ENCODE measurements at regions of chr1 and their contacts with region 1.

Region 1: DNA sequence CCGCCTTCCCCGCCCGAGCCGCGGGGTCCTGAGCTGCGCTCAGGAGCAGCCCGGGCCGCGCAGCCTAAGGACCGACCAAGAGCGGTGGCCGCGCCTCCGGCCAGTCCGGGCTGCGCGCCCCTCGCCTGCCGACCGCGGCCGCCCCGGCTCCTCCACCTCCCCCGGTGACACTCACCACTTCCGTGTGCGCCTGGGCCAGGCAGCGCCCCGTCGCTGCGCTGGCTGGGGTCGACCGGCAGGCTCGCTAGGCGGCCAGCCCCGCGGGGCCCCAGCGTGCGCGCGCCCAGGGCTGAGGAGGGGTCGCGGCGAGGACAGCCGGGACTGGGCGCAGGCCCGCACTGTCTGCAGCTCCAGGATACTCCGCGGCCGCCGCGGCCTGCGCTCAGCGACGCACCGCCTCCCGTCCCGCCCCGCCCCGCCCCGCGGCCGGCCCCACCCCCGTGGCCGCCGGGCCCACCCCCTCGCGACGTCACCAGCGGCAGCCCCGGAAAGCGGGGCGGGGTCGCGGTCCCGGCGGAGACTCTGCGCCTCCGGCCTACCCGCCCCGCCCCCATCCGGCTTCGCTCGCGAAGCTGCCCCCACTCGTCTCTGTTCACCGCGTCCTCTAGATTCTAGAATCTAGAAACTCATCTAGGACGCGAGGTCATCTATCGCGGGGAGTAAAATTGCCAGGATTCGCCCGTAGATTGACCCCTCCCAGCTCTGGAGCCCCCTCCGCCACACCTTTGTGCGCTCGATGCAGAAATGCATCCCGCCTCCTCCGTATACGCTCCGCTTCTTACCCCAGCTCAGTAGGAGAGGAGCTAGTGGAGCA is at the start of gene JAK1:
- DNase-seq: peak; percentile 91 to 92
- ATAC-seq: peak; percentile 92 to 96 (median 94)
- H3K4me3 ChIP-seq: peak within 1 kb of the TSS; percentile 66 to 99 (median 88)
- H3K27ac ChIP-seq: peak within 1 kb of the TSS; percentile 93 to 100 (median 96)
- H3K4me1 ChIP-seq: peaks cover 7 to 50% (median 32%) of the 10 kb centered on the region in 9 donors
- H3K27me3 ChIP-seq: no peaks in the 10 kb centered on the region
- CTCF ChIP-seq: peak in 3 of 9 donors; percentile 3 to 19 (median 10)
- total RNA-seq, gene JAK1: 73.4 to 122 (median 84.4) TPM

Region 2: DNA sequence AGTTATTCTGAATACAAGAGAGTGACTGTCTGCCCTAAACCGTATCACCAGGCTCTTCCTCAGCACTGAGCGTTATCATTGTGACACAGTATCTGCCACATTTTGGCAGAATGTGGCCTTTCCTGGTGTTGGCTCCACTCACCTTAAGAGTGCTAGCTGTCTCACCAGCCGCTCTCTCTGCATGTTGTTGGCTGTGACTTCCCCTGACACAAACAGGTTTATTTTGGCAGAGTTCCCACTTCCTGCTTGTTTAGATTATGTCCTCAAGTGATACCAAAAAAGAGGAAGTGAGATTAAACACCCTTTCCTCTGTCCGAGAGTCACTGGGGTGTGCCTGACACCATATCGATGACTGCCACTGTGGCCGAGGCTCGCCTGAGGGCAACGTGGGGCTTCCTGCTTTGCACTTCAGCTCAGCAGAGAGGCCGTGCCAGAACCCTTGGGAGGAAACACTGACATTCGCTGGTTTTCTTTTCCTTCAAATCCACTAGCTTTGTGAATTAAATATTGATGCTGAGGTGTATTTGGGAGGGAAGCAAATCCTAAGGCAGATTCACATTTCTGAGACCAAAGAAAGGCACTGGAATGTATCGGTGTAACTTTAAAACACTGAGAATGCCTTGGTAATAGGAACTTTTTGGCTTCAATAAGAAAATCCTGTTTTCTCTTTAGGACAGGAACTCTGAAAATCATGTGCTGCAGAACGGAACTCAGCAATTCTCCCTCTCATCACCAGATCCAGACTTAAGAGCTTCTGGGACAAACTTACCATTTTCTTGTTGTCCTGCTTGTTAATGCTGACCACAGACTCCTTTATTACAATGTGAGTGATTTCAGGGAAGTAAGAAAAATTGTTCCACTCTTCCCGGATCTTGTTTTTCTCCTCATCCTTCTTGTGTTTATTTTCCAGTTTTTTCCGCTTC is 102.1 kb before region 1 on chr1:
- intact Hi-C with region 1: loop called in 2 of 10 experiments (anchors 5 to 10 kb)
- DNase-seq: peak; percentile 67 to 71
- ATAC-seq: peak; percentile 85 to 95 (median 88)
- H3K4me3 ChIP-seq: peak overlapping the region in 1 of 10 donors; percentile 4
- H3K27ac ChIP-seq: peak overlapping the region in 8 of 10 donors; percentile 8 to 82 (median 62)
- H3K4me1 ChIP-seq: peaks cover 0 to 32% (median 19%) of the 10 kb centered on the region in 9 donors
- H3K27me3 ChIP-seq: no peaks in the 10 kb centered on the region
- CTCF ChIP-seq: no peak

Region 3: DNA sequence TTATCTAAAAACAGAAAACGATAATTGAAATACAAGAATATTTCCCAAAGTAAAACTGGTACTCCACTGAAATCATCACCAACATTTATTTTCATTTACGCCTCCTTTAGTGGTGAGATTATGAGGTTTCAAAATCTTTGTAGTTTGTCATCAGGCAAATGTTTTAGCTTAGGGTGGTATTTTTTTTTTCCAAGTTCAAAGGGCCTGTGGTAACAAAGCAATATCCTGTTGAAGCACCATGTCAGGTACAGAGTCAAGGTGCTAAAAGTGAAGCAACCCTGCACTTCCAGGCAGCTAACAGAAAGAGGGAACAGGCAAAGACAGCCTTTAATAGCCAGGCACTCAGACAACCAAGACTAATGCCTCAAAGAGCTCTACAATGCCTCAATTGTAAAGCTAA is 89.2 kb before region 1 on chr1:
- intact Hi-C with region 1: loop called in 3 of 10 experiments (anchors 5 to 10 kb)
- DNase-seq: no peak
- ATAC-seq: no peak
- H3K4me3 ChIP-seq: no peak overlapping the region
- H3K27ac ChIP-seq: peak overlapping the region in 1 of 10 donors; percentile 22
- H3K4me1 ChIP-seq: peaks cover 0 to 57% (median 25%) of the 10 kb centered on the region in 9 donors
- H3K27me3 ChIP-seq: no peaks in the 10 kb centered on the region
- CTCF ChIP-seq: no peak

Region 4: DNA sequence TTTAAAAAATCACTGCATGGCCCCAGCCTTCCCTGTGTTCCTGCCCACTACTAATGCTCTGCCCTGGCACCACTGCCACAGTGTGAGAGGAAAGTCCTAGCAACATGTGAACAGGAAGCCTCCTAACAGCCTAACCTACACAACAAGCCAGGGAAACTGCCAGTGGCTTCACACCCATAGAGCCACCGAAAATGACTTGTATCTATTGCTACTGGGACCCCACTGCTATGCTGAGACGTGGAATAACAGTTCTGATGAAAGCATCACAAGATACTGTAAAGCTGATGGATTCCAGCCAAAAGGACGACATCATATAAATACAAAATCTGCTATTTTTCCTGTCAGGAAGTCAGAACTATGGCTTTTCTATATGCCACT is 74.9 kb before region 1 on chr1:
- intact Hi-C with region 1: loop called in 5 of 10 experiments (anchors 5 to 10 kb)
- DNase-seq: no peak
- ATAC-seq: peak in 7 of 8 donors; percentile 34 to 76 (median 61)
- H3K4me3 ChIP-seq: peak overlapping the region in 6 of 10 donors; percentile 1 to 35 (median 20)
- H3K27ac ChIP-seq: peak overlapping the region in 9 of 10 donors; percentile 15 to 69 (median 48)
- H3K4me1 ChIP-seq: peaks cover 18 to 97% (median 85%) of the 10 kb centered on the region in 9 donors
- H3K27me3 ChIP-seq: no peaks in the 10 kb centered on the region
- CTCF ChIP-seq: no peak

Region 5: DNA sequence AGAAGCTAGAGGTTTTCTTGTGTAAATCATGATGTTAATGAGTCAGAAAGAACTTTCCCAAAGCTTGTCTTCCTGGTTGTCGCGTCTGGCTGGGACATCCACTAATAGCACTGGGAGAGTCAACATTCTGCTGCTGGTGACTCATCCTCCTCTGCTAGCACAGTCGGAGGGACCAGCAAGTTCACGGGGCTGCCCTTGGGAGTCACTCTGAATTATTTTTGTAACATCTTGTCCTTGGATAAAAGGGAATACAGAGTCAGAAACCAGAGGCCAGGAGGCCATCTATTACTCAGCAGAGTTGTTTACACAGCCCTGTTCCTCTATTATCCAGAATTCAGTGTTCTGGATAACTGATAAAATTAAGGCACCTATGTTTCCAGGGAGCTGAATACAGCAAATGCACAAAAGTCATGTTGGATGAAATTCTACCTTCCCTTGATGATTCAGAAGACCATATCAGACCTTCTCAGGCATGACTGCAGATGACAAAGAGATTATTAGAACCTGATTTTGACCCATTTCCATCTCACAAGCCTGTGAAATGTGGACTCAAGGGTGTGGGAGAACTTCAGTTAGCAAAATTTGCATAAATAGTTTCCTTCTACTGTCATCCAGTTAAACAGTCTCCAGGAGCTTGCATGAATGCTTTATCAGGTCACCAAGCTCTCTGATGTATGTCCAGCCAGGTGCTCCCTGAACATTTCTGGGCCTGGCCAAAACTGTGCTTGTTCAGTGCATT is 68.1 kb before region 1 on chr1:
- intact Hi-C with region 1: loop called in 6 of 10 experiments (anchors 5 to 10 kb)
- DNase-seq: peak; percentile 65 to 89
- ATAC-seq: peak; percentile 92 to 99 (median 96)
- H3K4me3 ChIP-seq: no peak overlapping the region
- H3K27ac ChIP-seq: peak overlapping the region; percentile 24 to 90 (median 78)
- H3K4me1 ChIP-seq: peaks cover 11 to 88% (median 62%) of the 10 kb centered on the region in 9 donors
- H3K27me3 ChIP-seq: no peaks in the 10 kb centered on the region
- CTCF ChIP-seq: no peak

Region 6: DNA sequence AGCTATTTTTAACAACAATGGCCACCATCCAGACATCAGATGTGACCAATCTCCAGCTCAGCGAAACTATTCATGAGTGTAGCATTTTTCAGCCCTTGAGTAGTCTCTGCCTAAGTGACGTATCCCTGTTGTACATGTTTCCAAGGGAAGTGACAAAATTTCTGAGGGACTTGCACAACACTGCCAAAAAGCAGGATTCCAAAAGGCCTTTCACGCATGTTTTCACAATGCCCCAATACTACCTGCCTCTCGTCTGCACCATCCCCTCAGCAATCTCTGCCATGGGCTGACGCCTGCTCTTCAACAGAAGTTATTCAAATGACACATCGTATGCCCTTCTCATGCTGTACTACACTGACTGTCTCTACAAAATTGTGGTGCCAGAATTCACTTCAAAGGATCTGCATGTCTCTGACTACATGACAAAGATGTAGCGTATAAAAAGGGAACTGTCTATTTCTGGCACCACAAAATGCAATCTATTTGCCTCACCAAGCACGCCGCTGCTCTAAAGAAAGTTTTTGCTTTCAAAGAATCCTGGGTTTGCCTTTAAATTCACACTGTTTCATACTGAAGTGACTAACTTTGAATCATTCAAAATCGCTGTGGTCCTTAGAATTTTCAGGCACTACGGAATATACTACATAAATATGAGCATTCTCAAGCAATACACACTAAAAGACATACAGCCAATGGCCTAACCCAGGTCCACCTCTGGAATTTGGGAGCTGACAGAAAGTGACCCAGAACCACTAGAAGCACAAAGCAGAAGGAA is 32.9 kb before region 1 on chr1:
- intact Hi-C with region 1: loop called in 1 of 10 experiments (anchors 5 kb)
- DNase-seq: peak in 1 of 2 donors; percentile 58
- ATAC-seq: peak; percentile 70 to 91 (median 83)
- H3K4me3 ChIP-seq: peak overlapping the region in 2 of 10 donors; percentile 1 to 8
- H3K27ac ChIP-seq: peak overlapping the region; percentile 53 to 85 (median 73)
- H3K4me1 ChIP-seq: peaks cover 9 to 65% (median 56%) of the 10 kb centered on the region in 9 donors
- H3K27me3 ChIP-seq: no peaks in the 10 kb centered on the region
- CTCF ChIP-seq: no peak

Region 7: DNA sequence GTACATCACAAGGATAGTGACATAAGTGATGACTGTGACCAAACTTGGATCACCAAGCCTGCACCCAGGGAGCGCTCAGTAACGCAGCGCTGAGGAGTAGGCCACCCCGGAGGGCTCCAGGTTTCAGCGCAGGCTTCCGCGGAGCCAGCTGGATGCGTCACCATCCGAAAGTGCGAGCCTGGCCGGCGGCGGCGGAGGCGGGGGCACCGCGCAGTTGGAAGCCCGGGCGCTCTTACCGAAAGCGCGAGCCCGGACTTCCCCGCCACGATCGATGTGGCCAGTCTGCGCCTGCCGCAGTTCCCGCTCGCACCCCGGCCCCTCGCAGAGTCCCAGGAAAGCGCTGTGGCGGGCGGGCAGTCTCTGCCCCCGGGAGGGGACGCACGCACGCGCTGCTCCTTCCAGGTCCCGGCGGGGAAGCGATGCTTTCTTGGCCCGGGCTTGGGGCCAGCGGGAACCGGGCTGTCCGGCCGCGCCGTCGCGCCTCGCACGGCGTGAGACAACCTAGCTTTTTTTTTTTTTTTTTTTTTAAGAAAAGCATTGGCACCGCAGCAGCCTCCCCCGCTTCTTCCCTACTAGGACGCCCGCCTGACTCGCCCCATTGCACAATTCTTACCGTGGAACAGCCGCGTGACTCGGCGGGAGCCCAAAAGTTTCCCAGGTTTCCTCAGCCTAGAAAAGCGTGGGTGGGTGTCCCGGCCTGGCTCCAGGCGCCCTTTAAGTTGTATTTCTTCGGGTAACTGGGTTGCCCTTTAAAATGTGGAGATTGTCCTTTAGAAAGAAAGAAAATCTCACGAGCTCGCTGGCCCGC is 36.3 kb after region 1 on chr1:
- intact Hi-C with region 1: loop called in 2 of 10 experiments (anchors 5 kb)
- DNase-seq: peak; percentile 81 to 83
- ATAC-seq: peak; percentile 84 to 95 (median 88)
- H3K4me3 ChIP-seq: peak overlapping the region; percentile 40 to 79 (median 64)
- H3K27ac ChIP-seq: peak overlapping the region; percentile 57 to 97 (median 92)
- H3K4me1 ChIP-seq: peaks cover 5 to 31% (median 19%) of the 10 kb centered on the region in 9 donors
- H3K27me3 ChIP-seq: no peaks in the 10 kb centered on the region
- CTCF ChIP-seq: no peak